Mammary epithelial cell (primary cell): ENCODE measurements at regions of chr16 and their contacts with region 1.

Region 1: DNA sequence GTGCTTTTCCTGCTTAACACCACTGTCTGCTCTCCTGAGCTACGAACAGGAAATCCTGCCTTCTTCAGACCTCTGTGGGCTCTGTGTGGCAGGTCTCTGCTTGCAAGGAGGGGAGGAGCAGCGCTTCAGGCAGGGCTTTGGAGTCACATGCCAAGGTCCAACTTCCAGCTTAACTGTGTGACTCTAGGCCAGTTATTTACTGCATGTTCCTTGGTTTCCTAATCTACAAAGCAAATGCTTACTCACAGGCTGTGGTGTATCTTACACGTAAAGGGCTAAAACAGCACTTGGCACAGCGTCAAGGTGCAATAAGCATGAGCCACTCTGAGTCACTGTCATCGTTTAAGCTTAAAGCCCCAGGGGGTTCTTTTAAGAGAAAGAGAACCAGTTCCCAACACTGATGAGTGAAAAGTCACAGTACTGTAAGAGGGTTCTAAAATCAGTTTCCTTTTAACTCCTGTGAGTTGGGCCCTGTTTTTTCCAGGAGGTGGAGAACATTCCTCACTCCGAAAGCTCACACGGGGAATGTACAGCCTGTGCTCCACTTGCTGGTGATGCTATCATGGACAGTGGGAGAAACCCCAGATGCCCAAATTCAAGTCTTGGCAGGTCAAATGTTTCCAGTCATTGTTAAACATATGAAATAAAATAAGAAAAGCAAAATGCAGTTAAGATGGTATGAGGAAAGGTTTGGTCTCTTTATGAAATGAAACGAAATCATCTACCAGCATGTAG is 54.1 kb upstream of the BCAR1 start:
- DNase-seq: peak; percentile 100
- H3K4me3 ChIP-seq: peak overlapping the region in 2 of 3 experiments; percentile 8 to 10
- H3K27ac ChIP-seq: peak overlapping the region; percentile 96
- H3K4me1 ChIP-seq: peaks cover 35% of the 10 kb centered on the region
- H3K27me3 ChIP-seq: no peaks in the 10 kb centered on the region
- CTCF ChIP-seq: peak in 1 of 2 donors; percentile 33

Region 2: GRCh38 chr16:75224306-75225091 is 81.0 kb before region 1 on chr16:
- CTCF ChIA-PET with region 1: no interaction called
- dilution Hi-C with region 1: no loop called
- in situ Hi-C with region 1: no loop called
- intact Hi-C with region 1: no loop called
- DNase-seq: no peak
- H3K4me3 ChIP-seq: no peak overlapping the region
- H3K27ac ChIP-seq: no peak overlapping the region
- H3K4me1 ChIP-seq: no peaks in the 10 kb centered on the region
- H3K27me3 ChIP-seq: no peaks in the 10 kb centered on the region
- CTCF ChIP-seq: no peak

Region 3: DNA sequence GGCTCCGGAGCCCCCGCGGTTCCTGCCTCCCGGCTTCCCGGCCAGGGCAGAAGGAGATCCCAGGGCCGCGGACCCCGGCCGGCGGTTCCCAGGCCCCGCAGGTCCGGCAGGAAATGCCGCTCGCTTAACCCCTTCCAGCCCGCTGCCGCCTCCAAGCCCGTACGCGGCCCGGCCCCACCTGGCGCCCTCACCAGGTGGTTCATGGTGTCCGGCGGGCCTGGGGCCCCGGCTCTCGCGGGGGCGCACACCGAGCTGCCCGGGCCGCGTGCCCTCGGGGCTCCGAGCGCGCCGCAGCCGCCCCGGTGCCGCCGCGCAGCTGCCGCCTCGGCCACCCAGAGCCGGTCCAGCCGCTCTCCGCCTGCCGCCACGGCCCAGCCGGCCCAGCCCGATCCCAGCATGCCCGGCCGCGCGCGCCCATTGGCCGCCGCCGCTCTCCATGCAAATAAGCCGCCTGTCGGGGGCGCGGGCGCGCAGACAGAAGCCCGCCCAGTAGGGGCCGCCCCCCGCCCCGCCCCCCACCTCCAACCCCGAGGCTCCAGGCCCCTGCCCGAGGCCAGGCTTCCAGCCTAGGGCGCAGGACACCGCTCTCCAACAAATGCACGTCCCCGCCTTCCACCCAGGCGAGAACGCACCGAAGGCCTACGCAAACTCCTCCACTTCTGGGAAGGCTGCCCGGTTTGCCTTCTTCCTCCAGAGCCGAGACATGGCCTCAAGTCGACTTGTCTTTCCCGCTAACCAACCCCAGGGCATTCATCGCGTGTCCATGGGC is 54.1 kb before region 1 on chr16 and contains the start of gene BCAR1:
- CTCF ChIA-PET with region 1: interaction called, 4 read pairs
- dilution Hi-C with region 1: no loop called
- in situ Hi-C with region 1: no loop called
- intact Hi-C with region 1: loop called (anchors 1 kb)
- DNase-seq: peak; percentile 81
- H3K4me3 ChIP-seq: peak within 1 kb of the TSS; percentile 79 to 90 (median 88)
- H3K27ac ChIP-seq: peak within 1 kb of the TSS; percentile 71
- H3K4me1 ChIP-seq: peaks cover 81% of the 10 kb centered on the region
- H3K27me3 ChIP-seq: no peaks in the 10 kb centered on the region
- CTCF ChIP-seq: no peak
- total RNA-seq, gene BCAR1: 58.0 to 103 TPM

Region 4: DNA sequence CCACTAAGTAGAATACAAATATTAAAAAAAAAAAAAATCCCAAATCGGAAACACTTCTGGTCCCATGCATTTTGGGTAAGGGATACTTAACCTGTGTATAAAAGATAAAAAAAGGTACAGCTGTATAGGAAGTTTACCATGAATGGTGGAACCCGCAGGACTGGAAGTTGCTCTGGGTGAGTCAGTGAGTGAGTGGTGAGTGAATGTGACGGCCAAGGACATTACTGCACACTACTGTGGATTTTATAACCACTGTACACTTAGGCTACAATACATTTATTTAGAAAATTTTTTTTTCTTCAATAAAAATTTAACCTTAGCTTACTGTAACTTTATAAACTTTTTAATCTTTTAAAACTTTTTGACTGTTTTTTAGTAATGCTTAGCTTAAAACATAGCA is 17.2 kb after region 1 on chr16:
- CTCF ChIA-PET with region 1: no interaction called
- dilution Hi-C with region 1: no loop called
- in situ Hi-C with region 1: no loop called
- intact Hi-C with region 1: loop called (anchors 1 kb)
- DNase-seq: peak; percentile 68
- H3K4me3 ChIP-seq: no peak overlapping the region
- H3K27ac ChIP-seq: peak overlapping the region; percentile 80
- H3K4me1 ChIP-seq: peaks cover 53% of the 10 kb centered on the region
- H3K27me3 ChIP-seq: no peaks in the 10 kb centered on the region
- CTCF ChIP-seq: no peak

Region 5: GRCh38 chr16:75372236-75372856 is 66.8 kb after region 1 on chr16:
- CTCF ChIA-PET with region 1: no interaction called
- dilution Hi-C with region 1: loop called (anchors 5 kb)
- in situ Hi-C with region 1: loop called in 1 of 2 experiments (anchors 5 kb)
- intact Hi-C with region 1: no loop called
- DNase-seq: no peak
- H3K4me3 ChIP-seq: no peak overlapping the region
- H3K27ac ChIP-seq: no peak overlapping the region
- H3K4me1 ChIP-seq: peaks cover 16% of the 10 kb centered on the region
- H3K27me3 ChIP-seq: no peaks in the 10 kb centered on the region
- CTCF ChIP-seq: no peak

Region 6: DNA sequence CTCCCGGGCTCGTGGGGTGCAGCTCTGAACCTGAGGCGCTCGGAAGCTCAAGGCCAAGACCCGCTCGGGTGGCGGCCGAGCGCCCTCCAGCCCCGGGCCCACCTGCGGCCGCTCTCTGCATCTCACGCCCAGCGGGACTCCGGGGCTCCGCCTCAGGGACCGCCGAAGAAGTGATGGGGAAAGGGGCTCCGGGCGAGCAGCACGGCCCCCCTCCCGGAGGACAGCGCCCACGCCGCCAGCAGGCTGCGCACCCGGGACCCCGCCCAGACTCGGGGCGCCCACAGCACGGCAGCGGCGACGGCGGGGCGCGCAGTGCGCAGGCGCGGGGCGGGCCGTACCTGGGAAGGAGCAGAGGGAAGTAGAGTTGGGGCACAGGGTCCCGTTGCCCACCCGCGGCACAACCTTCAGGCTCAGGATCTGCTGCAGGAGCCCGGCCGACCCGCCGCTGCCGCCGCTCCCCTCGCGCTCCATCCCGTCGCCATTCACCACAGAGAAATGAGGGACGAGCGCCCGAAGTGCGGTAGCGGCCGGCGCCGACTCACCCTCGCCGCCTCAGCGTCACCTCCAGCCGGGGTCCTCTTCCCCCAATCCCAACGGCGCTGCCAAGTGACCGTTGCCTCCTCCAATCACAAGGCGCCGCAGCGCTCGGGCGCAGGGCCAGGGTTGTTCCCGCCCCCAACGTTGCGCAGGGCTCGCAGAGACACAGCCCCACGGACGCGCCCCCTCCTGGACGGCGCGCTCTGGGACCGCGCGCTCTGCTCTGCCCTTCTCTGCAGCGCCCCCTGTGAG is 158.8 kb after region 1 on chr16 and contains the start of gene TMEM170A:
- CTCF ChIA-PET with region 1: interaction called, 6 read pairs
- dilution Hi-C with region 1: no loop called
- in situ Hi-C with region 1: no loop called
- intact Hi-C with region 1: loop called (anchors 10 kb)
- DNase-seq: peak; percentile 99
- H3K4me3 ChIP-seq: peak within 1 kb of the TSS; percentile 89 to 93 (median 90)
- H3K27ac ChIP-seq: peak within 1 kb of the TSS; percentile 81
- H3K4me1 ChIP-seq: peaks cover 12% of the 10 kb centered on the region
- H3K27me3 ChIP-seq: no peaks in the 10 kb centered on the region
- CTCF ChIP-seq: peak; percentile 99 to 100
- total RNA-seq, gene TMEM170A: 12.5 to 15.6 TPM